Caco-2 (cell line): ENCODE measurements at regions of chr14 and their contacts with region 1.

Region 1: GRCh38 chr14:23120541-23121251 is 1.6 kb upstream of the CEBPE start:
- DNase-seq: peak; percentile 88 to 89
- H3K4me3 ChIP-seq: no peak overlapping the region
- H3K4me3 Mint-ChIP-seq: no peak overlapping the region
- H3K27ac Mint-ChIP-seq: no peak overlapping the region
- H3K4me1 ChIP-seq: no peaks in the 10 kb centered on the region
- H3K4me1 Mint-ChIP-seq: peaks cover 7% of the 10 kb centered on the region
- H3K27me3 ChIP-seq: no peaks in the 10 kb centered on the region
- H3K27me3 Mint-ChIP-seq: no peaks in the 10 kb centered on the region
- CTCF ChIP-seq: peak; percentile 96 to 99

Region 2: GRCh38 chr14:23068476-23069412 is 52.0 kb before region 1 on chr14:
- CTCF ChIA-PET with region 1: interaction called, 20 read pairs
- POLR2A ChIA-PET with region 1: no interaction called
- intact Hi-C with region 1: no loop called
- DNase-seq: peak; percentile 89
- H3K4me3 ChIP-seq: no peak overlapping the region
- H3K4me3 Mint-ChIP-seq: peak overlapping the region; percentile 42
- H3K27ac Mint-ChIP-seq: peak overlapping the region; percentile 60
- H3K4me1 ChIP-seq: peaks cover 13% of the 10 kb centered on the region
- H3K4me1 Mint-ChIP-seq: peaks cover 32% of the 10 kb centered on the region
- H3K27me3 ChIP-seq: no peaks in the 10 kb centered on the region
- H3K27me3 Mint-ChIP-seq: no peaks in the 10 kb centered on the region
- CTCF ChIP-seq: peak; percentile 95 to 98

Region 3: DNA sequence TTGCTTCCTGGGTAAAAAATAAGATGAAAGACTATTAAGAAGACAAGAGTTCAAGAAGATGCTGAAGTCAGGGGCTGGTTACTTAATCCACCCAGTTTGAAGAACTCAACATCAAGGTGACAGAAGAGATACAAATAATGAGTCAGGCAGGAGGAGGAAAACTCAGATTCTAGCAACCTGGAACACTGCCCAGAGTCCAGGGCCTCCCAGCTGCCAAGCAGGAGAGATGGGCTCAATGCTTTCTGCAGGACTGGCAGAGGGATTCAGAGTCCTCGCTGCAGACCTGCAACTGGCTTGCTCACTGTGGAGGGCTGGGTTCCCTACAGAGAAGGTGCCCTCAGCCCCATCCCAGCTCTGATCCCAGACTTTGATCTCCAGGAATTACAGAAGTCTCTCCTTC is 27.0 kb after region 1 on chr14:
- CTCF ChIA-PET with region 1: interaction called, 17 read pairs
- POLR2A ChIA-PET with region 1: no interaction called
- intact Hi-C with region 1: no loop called
- DNase-seq: no peak
- H3K4me3 ChIP-seq: no peak overlapping the region
- H3K4me3 Mint-ChIP-seq: no peak overlapping the region
- H3K27ac Mint-ChIP-seq: no peak overlapping the region
- H3K4me1 ChIP-seq: peaks cover 29% of the 10 kb centered on the region
- H3K4me1 Mint-ChIP-seq: peaks cover 26% of the 10 kb centered on the region
- H3K27me3 ChIP-seq: no peaks in the 10 kb centered on the region
- H3K27me3 Mint-ChIP-seq: no peaks in the 10 kb centered on the region
- CTCF ChIP-seq: no peak

Region 4: GRCh38 chr14:23174276-23175184 is 53.8 kb after region 1 on chr14:
- CTCF ChIA-PET with region 1: interaction called, 21 read pairs
- POLR2A ChIA-PET with region 1: no interaction called
- intact Hi-C with region 1: no loop called
- DNase-seq: peak in 1 of 2 experiments; percentile 44
- H3K4me3 ChIP-seq: no peak overlapping the region
- H3K4me3 Mint-ChIP-seq: peak overlapping the region; percentile 25
- H3K27ac Mint-ChIP-seq: peak overlapping the region; percentile 77
- H3K4me1 ChIP-seq: peaks cover 63% of the 10 kb centered on the region
- H3K4me1 Mint-ChIP-seq: peaks cover 42% of the 10 kb centered on the region
- H3K27me3 ChIP-seq: no peaks in the 10 kb centered on the region
- H3K27me3 Mint-ChIP-seq: no peaks in the 10 kb centered on the region
- CTCF ChIP-seq: no peak

Region 5: DNA sequence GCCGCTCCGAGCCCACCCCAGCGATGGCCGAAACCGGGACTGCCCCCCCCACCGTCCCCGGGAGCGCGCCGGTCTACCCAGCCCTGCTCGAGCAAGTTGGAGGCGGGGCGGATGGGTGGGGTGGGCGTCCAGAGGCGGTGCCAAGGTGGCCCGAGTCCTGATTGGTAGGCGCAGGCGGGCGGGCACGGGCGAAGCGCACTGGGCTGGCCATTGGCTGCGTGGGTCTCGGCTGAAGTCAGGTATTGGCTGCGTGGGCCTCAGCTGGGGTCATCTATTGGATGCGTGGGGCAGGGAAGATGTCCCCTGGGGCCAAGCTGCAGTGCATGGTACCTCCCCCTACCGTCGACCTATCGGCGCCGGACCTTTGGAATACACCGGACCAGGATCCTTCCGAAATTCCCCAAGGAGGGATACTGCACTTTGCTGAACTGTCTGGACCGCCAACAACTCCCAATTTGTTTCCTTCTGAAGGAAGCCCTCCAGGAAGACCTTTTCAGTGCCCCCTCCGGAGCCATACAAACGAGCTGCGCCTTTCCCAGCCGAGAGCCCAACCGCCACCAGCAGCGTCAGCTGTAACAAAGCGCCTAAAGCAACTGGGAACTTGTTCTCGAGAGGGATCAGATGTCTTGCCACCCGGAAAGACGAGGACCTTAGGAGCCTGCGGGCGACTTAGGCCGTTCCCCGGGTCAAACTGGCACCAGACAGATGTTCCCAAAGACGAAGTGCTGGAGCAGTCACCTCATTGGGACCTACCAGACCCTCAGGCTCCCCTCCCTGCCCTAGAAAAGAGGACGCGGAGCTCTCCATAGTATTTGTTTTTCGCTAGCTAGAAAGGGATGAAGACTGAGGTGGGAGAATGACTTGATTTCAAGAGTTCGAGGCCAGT is 165.6 kb after region 1 on chr14 and contains the start of gene HOMEZ:
- CTCF ChIA-PET with region 1: interaction called, 12 read pairs
- POLR2A ChIA-PET with region 1: no interaction called
- intact Hi-C with region 1: no loop called
- DNase-seq: peak; percentile 99
- H3K4me3 ChIP-seq: peak within 1 kb of the TSS; percentile 75
- H3K4me3 Mint-ChIP-seq: peak within 1 kb of the TSS; percentile 90
- H3K27ac Mint-ChIP-seq: peak within 1 kb of the TSS; percentile 95
- H3K4me1 ChIP-seq: 0 out of 2 replicates have a peak, but pooled peaks cover 4% of the 10 kb centered on the region
- H3K4me1 Mint-ChIP-seq: peaks cover 6% of the 10 kb centered on the region
- H3K27me3 ChIP-seq: no peaks in the 10 kb centered on the region
- H3K27me3 Mint-ChIP-seq: no peaks in the 10 kb centered on the region
- CTCF ChIP-seq: peak in 1 of 2 experiments; percentile 18
- total RNA-seq, gene HOMEZ: 7.4 and 7.6 TPM in 2 replicates